ENCODE measurements at regions of chr4 and their contacts with region 1.

Region 1: DNA sequence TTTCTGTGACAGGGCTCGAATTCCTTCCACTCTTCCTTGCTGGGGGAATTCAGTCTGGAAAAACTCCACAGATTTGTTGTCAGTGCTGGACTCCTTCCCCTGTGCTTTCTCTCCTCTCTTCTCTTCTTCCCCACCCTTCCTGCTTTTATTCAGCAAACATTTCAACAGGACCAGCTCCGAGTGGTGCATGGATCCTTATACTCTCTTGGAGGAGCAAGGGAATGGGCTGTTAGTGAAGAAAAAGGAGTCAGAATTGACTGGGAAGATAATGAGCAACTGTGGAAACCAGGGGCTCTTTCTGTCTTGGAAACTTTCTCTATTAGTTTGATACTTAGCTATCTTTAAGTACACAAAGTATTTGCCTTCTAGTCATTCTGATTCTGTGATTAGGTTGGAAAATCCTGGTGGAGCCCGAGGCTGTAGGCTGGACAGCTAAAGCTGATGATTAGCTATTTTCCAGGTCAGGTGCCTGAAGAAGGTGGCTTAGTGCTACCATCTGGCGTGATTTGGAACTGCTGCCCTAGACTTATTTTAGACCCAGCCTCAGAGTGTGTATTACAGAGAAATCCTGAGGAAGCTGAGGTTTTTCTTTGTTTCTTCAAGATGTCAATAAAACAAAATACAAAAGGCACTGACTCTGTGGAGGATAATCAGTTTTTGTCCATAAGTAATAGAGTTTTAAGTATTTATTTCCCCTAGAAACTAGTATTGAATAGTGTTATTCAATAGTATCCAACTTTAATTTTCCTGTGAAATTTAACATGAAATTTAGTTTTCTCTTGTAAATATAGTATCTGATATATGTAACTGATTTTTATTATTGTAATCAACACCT is 38.4 kb downstream of the NAP1L5 start:
- DNase-seq: no peak

Region 2: DNA sequence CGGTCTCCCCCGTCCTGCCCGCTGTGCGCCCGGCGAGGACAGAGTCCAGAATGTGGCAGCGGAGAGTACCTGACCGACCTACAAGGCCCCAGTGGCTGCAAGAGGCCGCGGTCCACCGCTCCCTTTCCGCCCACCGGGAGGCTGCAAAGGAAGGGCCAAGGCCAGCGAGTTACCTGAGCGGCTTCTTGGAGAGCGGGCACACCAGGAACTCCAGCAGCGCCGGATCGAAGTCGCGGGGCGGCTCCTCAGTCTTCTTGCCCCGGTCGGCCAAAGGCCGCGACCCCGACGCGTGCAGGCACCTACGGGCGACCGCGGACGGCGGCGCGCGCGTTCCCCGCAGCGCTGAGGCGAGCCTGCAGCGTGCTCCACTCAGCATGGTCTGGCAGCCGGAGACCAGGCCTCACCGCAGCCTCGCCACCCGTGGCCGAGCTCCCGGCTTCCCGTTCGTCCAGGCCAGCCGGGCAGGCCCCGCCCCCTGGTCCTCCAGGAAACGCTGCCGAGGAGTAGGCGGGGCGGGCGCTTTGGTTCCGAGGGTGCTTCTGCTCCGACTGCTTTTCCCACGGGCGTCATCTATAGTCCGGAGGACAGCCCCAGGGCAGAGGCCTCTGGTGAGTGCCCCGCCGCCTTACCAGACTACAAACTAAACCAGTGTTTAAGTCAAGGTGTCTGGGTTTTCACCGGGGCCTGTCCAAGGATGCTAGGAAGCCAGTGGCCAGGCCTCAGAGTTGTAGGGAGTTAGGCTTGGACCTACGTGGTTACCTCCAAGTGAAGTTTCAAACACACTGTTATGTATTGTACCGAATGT is 135.7 kb before region 1 on chr4 and contains the start of gene PYURF:
- intact Hi-C with region 1: loop called (anchors 5 to 10 kb)
- DNase-seq: peak; percentile 98
- total RNA-seq, gene PYURF: 61.6 to 65.9 TPM

Region 3: GRCh38 chr4:88591787-88592599 is 67.3 kb before region 1 on chr4 and contains the start of gene HERC3:
- intact Hi-C with region 1: loop called in 1 of 2 experiments (anchors 10 kb)
- DNase-seq: peak; percentile 97
- total RNA-seq, gene HERC3: 27.1 to 53.6 TPM